Esophagus muscularis mucosa (tissue), 4 donors: ENCODE measurements at regions of chr1 and their contacts with region 1.

Region 1: GRCh38 chr1:171781176-171781875 is at the start of gene METTL13:
- DNase-seq: peak; percentile 100
- H3K4me3 ChIP-seq: peak within 1 kb of the TSS; percentile 70 to 85 (median 76)
- H3K27ac ChIP-seq: peak within 1 kb of the TSS; percentile 83 to 89 (median 88)
- H3K4me1 ChIP-seq: peaks cover 23 to 51% (median 48%) of the 10 kb centered on the region in 4 donors
- H3K27me3 ChIP-seq: no peaks in the 10 kb centered on the region
- CTCF ChIP-seq: peak in 2 of 3 experiments; percentile 5 to 18
- EP300 ChIP-seq: no peak
- POLR2A ChIP-seq: peak; percentile 82
- total RNA-seq, gene METTL13: 17.5 to 20.9 (median 20.0) TPM

Region 2: GRCh38 chr1:171644805-171645483 is 136.4 kb before region 1 on chr1:
- intact Hi-C with region 1: loop called (anchors 2 kb)
- DNase-seq: peak; percentile 93
- H3K4me3 ChIP-seq: peak overlapping the region; percentile 10 to 17 (median 12)
- H3K27ac ChIP-seq: peak overlapping the region; percentile 81 to 89 (median 84)
- H3K4me1 ChIP-seq: peaks cover 17 to 50% (median 35%) of the 10 kb centered on the region in 4 donors
- H3K27me3 ChIP-seq: no peaks in the 10 kb centered on the region
- CTCF ChIP-seq: peak; percentile 77 to 87 (median 86)
- EP300 ChIP-seq: no peak
- POLR2A ChIP-seq: no peak

Region 3: DNA sequence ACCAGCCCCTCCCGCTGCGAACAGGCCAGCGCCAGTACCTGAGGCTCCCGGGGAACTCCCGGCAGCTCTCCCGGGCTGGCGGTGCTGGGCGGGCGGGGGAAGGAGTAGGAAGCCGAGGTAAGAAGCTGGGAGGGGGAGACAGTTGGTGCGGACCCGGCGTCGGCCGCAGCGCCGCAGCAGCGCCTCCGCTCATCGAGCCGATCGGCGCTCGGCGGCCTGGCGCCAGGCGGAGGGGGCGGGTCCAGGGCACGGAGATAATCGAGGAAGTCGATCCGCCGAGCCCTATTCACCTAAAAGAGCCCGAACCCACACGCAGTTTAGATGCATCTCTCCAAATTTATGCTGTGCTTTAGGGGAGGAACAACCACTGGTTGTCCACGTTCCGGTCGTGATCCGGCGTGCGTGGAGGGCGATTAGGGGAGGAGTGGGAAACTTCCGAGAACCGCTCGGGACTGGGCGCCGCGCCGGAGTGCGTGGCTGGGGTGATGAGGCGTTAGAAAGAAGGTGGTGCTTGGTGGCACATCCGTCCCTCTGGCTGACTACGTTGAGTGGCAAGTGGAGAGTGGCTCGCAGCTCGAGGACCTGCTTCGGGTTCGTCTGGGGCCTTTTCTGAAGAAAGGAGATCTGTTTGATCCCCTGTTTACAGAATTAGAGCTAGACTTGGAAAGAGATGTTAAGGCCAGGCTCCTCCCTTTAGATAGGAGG is 39.3 kb before region 1 on chr1 and contains the start of gene VAMP4:
- intact Hi-C with region 1: loop called (anchors 2 kb)
- DNase-seq: peak; percentile 96
- H3K4me3 ChIP-seq: peak within 1 kb of the TSS; percentile 85 to 93 (median 90)
- H3K27ac ChIP-seq: peak within 1 kb of the TSS; percentile 96 to 98 (median 97)
- H3K4me1 ChIP-seq: peaks cover 28 to 44% (median 36%) of the 10 kb centered on the region in 4 donors
- H3K27me3 ChIP-seq: no peaks in the 10 kb centered on the region
- CTCF ChIP-seq: no peak
- EP300 ChIP-seq: no peak
- POLR2A ChIP-seq: peak; percentile 88
- total RNA-seq, gene VAMP4: 14.2 to 19.9 (median 16.1) TPM

Region 4: GRCh38 chr1:171929121-171929520 is 147.8 kb after region 1 on chr1:
- intact Hi-C with region 1: no loop called
- DNase-seq: no peak
- H3K4me3 ChIP-seq: no peak overlapping the region
- H3K27ac ChIP-seq: no peak overlapping the region
- H3K4me1 ChIP-seq: no peaks in the 10 kb centered on the region
- H3K27me3 ChIP-seq: no peaks in the 10 kb centered on the region
- CTCF ChIP-seq: peak in 1 of 3 experiments; percentile 14
- EP300 ChIP-seq: no peak
- POLR2A ChIP-seq: no peak

Region 5: DNA sequence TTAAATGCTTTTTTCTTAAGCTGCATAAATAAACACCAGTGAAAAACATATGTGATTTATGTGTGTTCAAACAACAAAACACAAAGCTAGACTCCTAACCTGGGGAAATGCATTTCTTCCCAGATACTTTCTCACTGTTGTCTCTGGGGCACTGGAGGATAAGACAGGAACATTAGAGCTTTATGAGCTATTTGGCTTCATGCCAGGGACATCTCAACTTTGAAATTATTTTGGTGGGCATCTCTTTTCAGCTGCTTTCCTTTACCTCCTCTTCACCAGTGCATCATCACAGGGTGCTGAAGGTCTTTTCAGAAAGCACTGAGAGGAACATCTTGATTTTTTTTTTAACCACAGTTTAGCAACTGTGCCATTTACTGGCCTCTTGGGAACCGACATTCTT is 272.8 kb after region 1 on chr1:
- intact Hi-C with region 1: no loop called
- DNase-seq: no peak
- H3K4me3 ChIP-seq: no peak overlapping the region
- H3K27ac ChIP-seq: no peak overlapping the region
- H3K4me1 ChIP-seq: no peaks in the 10 kb centered on the region
- H3K27me3 ChIP-seq: no peaks in the 10 kb centered on the region
- CTCF ChIP-seq: no peak
- EP300 ChIP-seq: no peak
- POLR2A ChIP-seq: no peak

Region 6: GRCh38 chr1:172343240-172344160 is 562.2 kb after region 1 on chr1:
- intact Hi-C with region 1: no loop called
- DNase-seq: no peak
- H3K4me3 ChIP-seq: peak overlapping the region; percentile 3 to 21 (median 10)
- H3K27ac ChIP-seq: peak overlapping the region; percentile 58 to 70 (median 66)
- H3K4me1 ChIP-seq: peaks cover 6 to 19% (median 18%) of the 10 kb centered on the region in 4 donors
- H3K27me3 ChIP-seq: no peaks in the 10 kb centered on the region
- CTCF ChIP-seq: no peak
- EP300 ChIP-seq: no peak
- POLR2A ChIP-seq: no peak